K562 (cell line): ENCODE measurements at regions of chrX and their contacts with region 1.

Region 1: DNA sequence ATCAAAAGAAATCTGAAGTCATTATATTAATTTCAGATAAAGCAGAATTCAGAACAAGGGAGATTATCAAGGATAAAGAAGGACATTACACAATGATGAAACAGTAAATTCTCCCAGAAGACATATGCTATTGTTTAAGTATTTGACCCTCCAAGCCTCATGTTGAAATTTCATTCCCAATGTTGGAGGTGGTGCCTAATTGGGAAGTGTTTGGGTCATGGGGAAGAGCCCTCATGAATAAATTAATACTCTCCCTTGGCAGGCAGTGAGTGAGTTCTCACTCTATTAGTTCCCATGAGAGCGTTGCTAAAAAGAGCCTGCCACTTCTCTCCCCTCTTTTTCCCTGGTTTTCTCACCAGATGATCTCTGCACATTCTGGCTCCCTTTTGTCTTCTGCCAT is 249.9 kb upstream of the GRIA3 start:
- DNase-seq: no peak
- ATAC-seq: no peak
- H3K4me3 ChIP-seq: no peak overlapping the region
- H3K27ac ChIP-seq: no peak overlapping the region
- H3K4me1 ChIP-seq: no peaks in the 10 kb centered on the region
- H3K27me3 ChIP-seq: no peaks in the 10 kb centered on the region
- CTCF ChIP-seq: no peak
- EP300 ChIP-seq: no peak
- POLR2A ChIP-seq: no peak
- RAD21 ChIP-seq: no peak

Region 2: GRCh38 chrX:121504148-121504547 is 1430.0 kb before region 1 on chrX:
- CTCF ChIA-PET with region 1: no interaction called
- POLR2A ChIA-PET with region 1: no interaction called
- in situ Hi-C with region 1: loop called (anchors 10 kb)
- intact Hi-C with region 1: no loop called
- DNase-seq: no peak
- ATAC-seq: no peak
- H3K4me3 ChIP-seq: no peak overlapping the region
- H3K27ac ChIP-seq: no peak overlapping the region
- H3K4me1 ChIP-seq: no peaks in the 10 kb centered on the region
- H3K27me3 ChIP-seq: no peaks in the 10 kb centered on the region
- CTCF ChIP-seq: no peak
- EP300 ChIP-seq: no peak
- POLR2A ChIP-seq: no peak
- RAD21 ChIP-seq: no peak

Region 3: DNA sequence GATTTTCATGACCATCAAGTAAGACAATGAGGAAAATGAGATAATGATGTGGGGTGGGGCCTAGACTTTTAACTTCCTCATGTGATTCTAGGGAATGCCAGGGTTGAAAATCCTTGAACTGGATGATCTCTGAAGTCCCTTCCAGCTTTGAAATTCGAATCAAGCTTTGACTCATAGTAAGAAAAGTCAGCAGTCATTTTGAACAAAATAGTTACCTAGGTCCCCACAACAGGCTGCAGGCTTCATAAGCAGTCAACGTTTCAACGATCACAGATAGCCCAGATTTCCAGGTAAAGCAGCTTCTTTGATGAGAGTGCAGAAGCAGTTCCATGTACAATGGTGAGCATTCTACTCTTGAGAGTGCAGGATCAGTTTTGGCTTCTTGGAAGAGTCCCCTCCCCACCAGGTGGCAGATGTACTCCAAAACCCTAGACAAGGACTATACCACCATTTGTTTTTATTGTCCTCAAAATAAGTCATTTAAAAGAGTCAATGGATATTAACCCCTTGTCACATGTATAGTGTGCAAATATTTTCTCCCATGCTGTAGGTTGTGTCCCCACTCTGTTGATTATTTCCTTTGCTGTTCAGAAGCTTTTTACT is 343.8 kb after region 1 on chrX:
- CTCF ChIA-PET with region 1: no interaction called
- POLR2A ChIA-PET with region 1: no interaction called
- in situ Hi-C with region 1: no loop called
- intact Hi-C with region 1: no loop called
- DNase-seq: peak in 1 of 4 experiments; percentile 2
- ATAC-seq: no peak
- H3K4me3 ChIP-seq: no peak overlapping the region
- H3K27ac ChIP-seq: no peak overlapping the region
- H3K4me1 ChIP-seq: no peaks in the 10 kb centered on the region
- H3K27me3 ChIP-seq: no peaks in the 10 kb centered on the region
- CTCF ChIP-seq: peak in 1 of 3 experiments; percentile 20; a peak in 1 of 6 replicates
- EP300 ChIP-seq: no peak
- POLR2A ChIP-seq: no peak
- RAD21 ChIP-seq: peak in 1 of 2 experiments; percentile 10; a peak in 1 of 4 replicates